CD8-positive, alpha-beta T cell (primary cell): ENCODE measurements at regions of chrX and their contacts with region 1.

Region 1: GRCh38 chrX:104935581-104935980 is 284.9 kb downstream of the TEX13A start:
- DNase-seq: no peak
- ATAC-seq: no peak
- H3K4me3 ChIP-seq: no peak overlapping the region
- H3K4me3 Mint-ChIP-seq: no peak overlapping the region
- H3K27ac ChIP-seq: no peak overlapping the region
- H3K27ac Mint-ChIP-seq: no peak overlapping the region
- H3K4me1 ChIP-seq: no peaks in the 10 kb centered on the region
- H3K4me1 Mint-ChIP-seq: no peaks in the 10 kb centered on the region
- H3K27me3 ChIP-seq: no peaks in the 10 kb centered on the region
- H3K27me3 Mint-ChIP-seq: no peaks in the 10 kb centered on the region
- CTCF ChIP-seq: no peak

Region 2: GRCh38 chrX:104913348-104913747 is 22.2 kb before region 1 on chrX:
- CTCF ChIA-PET with region 1: no interaction called
- POLR2A ChIA-PET with region 1: no interaction called
- intact Hi-C with region 1: no loop called
- DNase-seq: peak in 1 of 9 experiments; percentile 4
- ATAC-seq: peak; percentile 26
- H3K4me3 ChIP-seq: no peak overlapping the region
- H3K4me3 Mint-ChIP-seq: no peak overlapping the region
- H3K27ac ChIP-seq: no peak overlapping the region
- H3K27ac Mint-ChIP-seq: peak overlapping the region; percentile 27
- H3K4me1 ChIP-seq: peaks cover 12% of the 10 kb centered on the region
- H3K4me1 Mint-ChIP-seq: peaks cover 15% of the 10 kb centered on the region
- H3K27me3 ChIP-seq: no peaks in the 10 kb centered on the region
- H3K27me3 Mint-ChIP-seq: no peaks in the 10 kb centered on the region
- CTCF ChIP-seq: peak; percentile 26

Region 3: GRCh38 chrX:106588801-106589200 is 1653.2 kb after region 1 on chrX:
- CTCF ChIA-PET with region 1: no interaction called
- POLR2A ChIA-PET with region 1: no interaction called
- intact Hi-C with region 1: loop called in 1 of 2 experiments (anchors 10 kb)
- DNase-seq: no peak
- ATAC-seq: no peak
- H3K4me3 ChIP-seq: no peak overlapping the region
- H3K4me3 Mint-ChIP-seq: no peak overlapping the region
- H3K27ac ChIP-seq: no peak overlapping the region
- H3K27ac Mint-ChIP-seq: no peak overlapping the region
- H3K4me1 ChIP-seq: no peaks in the 10 kb centered on the region
- H3K4me1 Mint-ChIP-seq: no peaks in the 10 kb centered on the region
- H3K27me3 ChIP-seq: no peaks in the 10 kb centered on the region
- H3K27me3 Mint-ChIP-seq: no peaks in the 10 kb centered on the region
- CTCF ChIP-seq: no peak